ENCODE measurements at regions of chr4 and their contacts with region 1.

Region 1: DNA sequence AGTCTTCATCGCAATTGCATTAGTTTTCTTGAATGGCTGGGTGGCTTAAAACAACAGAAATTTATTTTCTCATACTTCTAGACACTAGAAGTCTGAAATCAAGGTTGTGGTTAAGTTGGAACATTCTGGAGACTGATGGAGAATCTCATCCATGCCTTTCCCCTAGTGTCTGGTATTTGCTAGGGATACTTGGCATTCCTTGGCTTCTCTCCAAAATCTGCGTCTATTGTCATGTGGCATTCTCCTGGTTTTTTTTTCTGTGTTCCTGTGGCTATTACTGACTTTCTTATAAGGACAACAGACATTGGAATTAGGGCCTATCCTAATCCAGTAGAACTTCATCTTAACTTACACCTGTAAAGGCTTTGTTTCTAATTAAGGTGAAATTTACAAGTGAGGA is 272.8 kb upstream of the EPHA5 start:
- DNase-seq: no peak
- ATAC-seq: no peak
- H3K4me3 ChIP-seq: no peak overlapping the region
- H3K27ac ChIP-seq: no peak overlapping the region
- H3K4me1 ChIP-seq: no peaks in the 10 kb centered on the region
- H3K27me3 ChIP-seq: no peaks in the 10 kb centered on the region
- CTCF ChIP-seq: no peak
- POLR2A ChIP-seq: no peak
- RAD21 ChIP-seq: no peak

Region 2: GRCh38 chr4:65917486-65917885 is 25.6 kb before region 1 on chr4:
- CTCF ChIA-PET with region 1: no interaction called
- POLR2A ChIA-PET with region 1: no interaction called
- dilution Hi-C with region 1: no loop called
- in situ Hi-C with region 1: no loop called
- intact Hi-C with region 1: loop called (anchors 1 kb)
- DNase-seq: no peak
- ATAC-seq: no peak
- H3K4me3 ChIP-seq: no peak overlapping the region
- H3K27ac ChIP-seq: no peak overlapping the region
- H3K4me1 ChIP-seq: no peaks in the 10 kb centered on the region
- H3K27me3 ChIP-seq: no peaks in the 10 kb centered on the region
- CTCF ChIP-seq: no peak
- POLR2A ChIP-seq: no peak
- RAD21 ChIP-seq: no peak

Measured in IMR-90 (cell line).